ENCODE measurements at regions of chr9 and their contacts with region 1.

Region 1: DNA sequence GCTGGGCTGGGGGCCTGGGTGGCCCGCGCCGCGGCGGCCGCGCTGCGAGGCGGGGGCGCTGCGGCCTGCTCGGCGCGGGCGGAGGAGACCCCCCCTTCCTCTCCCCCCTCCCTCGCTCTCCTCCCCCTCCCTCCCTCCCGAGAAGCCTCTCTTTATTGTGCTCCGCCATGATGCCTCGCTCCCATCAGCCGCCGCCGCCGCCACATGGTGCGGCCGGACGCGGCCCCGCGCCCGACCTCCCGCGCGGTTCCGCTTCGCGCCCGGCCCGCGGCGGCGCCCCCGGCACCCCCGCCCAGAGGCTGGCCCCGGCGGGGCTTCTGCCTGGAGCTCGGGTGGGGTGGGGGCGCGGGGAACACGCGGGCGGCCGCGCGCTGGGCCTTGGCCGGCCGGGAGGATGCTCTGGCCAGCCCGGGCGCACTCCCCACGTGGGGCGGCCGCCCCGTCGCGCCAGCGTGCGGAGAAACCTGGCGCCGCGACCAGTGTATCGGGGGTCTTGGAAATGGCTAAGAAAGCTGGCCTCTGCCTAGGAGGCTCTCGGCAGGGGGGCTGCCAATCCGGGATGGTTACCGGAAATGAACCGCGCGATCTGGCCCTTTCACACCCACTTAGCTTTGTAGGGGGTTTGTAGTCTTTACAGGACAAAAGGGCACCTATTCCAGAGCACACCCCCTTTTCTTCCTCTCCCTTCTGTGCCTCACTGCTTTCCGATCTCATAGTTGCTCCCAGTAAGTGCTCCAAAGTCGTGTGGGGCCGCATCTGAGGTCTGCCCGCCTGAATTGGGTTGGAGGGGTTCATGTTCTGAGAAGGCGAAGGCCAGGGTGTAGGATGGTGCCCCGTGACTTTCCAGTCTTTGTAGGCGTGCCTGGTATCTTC is 1.0 kb downstream of the SET start:
- DNase-seq: peak; percentile 31 to 86
- H3K4me3 ChIP-seq: peak overlapping the region; percentile 86 to 99 (median 94)
- H3K27ac ChIP-seq: peak overlapping the region; percentile 64 to 99 (median 98)
- H3K4me1 ChIP-seq: peaks cover 25 to 55% (median 48%) of the 10 kb centered on the region in 4 donors
- H3K27me3 ChIP-seq: no peaks in the 10 kb centered on the region
- CTCF ChIP-seq: no peak
- EP300 ChIP-seq: no peak
- POLR2A ChIP-seq: no peak

Region 2: GRCh38 chr9:128428644-128429512 is 261.2 kb before region 1 on chr9:
- intact Hi-C with region 1: no loop called
- DNase-seq: no peak
- H3K4me3 ChIP-seq: no peak overlapping the region
- H3K27ac ChIP-seq: no peak overlapping the region
- H3K4me1 ChIP-seq: no peaks in the 10 kb centered on the region
- H3K27me3 ChIP-seq: no peaks in the 10 kb centered on the region
- CTCF ChIP-seq: no peak
- EP300 ChIP-seq: no peak
- POLR2A ChIP-seq: no peak

Region 3: GRCh38 chr9:128628471-128629048 is 61.5 kb before region 1 on chr9:
- intact Hi-C with region 1: no loop called
- DNase-seq: peak in 1 of 2 donors; percentile 44
- H3K4me3 ChIP-seq: no peak overlapping the region
- H3K27ac ChIP-seq: peak overlapping the region in 3 of 5 donors; percentile 29 to 38 (median 30)
- H3K4me1 ChIP-seq: peaks cover 0 to 11% (median 3%) of the 10 kb centered on the region in 4 donors
- H3K27me3 ChIP-seq: no peaks in the 10 kb centered on the region
- CTCF ChIP-seq: no peak
- EP300 ChIP-seq: no peak
- POLR2A ChIP-seq: no peak

Region 4: DNA sequence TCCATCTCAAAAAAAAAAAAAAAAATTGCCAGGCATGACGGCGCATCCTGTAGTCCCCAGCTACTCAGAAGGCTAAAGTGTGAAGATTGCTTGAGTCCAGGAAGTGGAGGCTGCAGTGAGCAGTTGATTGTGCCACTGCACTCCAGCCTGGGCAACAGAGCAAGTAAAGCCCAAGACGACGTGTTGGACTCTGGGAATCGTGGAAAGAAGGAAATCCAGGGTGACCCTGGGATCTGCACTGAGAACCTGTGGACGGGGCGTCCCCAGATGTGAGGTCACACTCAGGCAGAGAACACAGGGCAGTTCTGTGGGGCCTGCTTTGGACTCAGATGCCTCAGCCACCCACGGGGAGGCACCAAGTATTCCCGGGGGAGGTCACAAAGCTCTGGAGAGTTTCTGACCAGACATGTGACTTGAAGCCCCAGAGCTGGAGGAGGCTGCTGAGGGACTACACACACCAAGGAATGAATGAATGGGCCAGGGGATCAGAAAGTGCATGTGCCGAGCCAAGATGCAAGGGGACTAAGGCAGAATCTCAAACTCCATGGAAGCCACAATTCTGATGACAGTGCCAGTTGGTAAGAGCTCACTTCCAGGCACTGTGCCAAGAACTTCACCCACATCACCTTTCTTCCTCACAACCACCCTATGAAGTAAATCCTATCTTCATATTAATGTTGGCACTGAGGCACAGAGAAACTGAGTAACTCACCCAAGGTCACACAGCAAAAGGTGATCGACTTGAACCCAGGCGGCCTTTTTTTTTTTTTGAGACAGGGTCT is 46.3 kb before region 1 on chr9:
- intact Hi-C with region 1: loop called (anchors 10 kb)
- DNase-seq: no peak
- H3K4me3 ChIP-seq: no peak overlapping the region
- H3K27ac ChIP-seq: no peak overlapping the region
- H3K4me1 ChIP-seq: peaks cover 0 to 4% (median 0%) of the 10 kb centered on the region in 4 donors
- H3K27me3 ChIP-seq: no peaks in the 10 kb centered on the region
- CTCF ChIP-seq: no peak
- EP300 ChIP-seq: no peak
- POLR2A ChIP-seq: no peak

Region 5: GRCh38 chr9:128870128-128870952 is 180.3 kb after region 1 on chr9:
- intact Hi-C with region 1: no loop called
- DNase-seq: no peak
- H3K4me3 ChIP-seq: no peak overlapping the region
- H3K27ac ChIP-seq: no peak overlapping the region
- H3K4me1 ChIP-seq: peaks cover 0 to 5% (median under 1%) of the 10 kb centered on the region in 4 donors
- H3K27me3 ChIP-seq: no peaks in the 10 kb centered on the region
- CTCF ChIP-seq: no peak
- EP300 ChIP-seq: no peak
- POLR2A ChIP-seq: no peak